PC-3 (cell line): ENCODE measurements at regions of chr5 and their contacts with region 1.

Region 1: DNA sequence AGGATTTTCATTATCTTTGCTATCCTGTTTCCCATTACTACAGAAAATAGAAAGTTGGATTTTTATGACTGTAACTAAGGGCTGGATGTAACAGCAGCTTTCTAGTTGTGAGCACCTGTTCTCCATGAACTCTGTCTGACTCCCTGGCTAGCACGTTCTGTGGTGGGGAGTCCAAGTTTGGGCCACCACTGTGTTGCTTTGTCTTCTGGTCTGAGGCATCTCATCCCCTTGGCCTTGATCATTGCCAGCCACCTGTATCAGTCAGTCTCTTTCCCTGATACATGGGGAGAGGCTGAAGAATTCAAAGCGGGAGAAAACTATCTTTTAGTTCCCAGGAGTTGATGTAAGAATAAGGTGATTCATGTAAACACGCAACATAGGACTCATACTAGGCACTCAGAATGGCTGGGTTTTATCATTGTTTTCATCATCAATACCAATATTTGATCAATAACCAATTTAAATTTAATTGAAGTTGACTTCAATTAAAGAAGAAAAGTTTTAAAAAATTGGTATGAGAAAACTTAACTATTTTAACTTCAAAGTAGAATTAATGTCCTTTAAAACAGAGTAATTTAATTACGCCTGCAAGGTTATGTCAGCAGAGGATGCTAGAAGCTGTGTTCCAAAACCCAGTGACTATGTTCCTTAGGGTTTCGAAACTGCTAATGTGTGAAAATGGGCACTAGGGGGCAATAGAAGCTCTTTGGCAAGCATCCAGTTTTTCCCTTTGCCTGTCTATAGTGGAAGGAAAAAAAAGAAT is 33.6 kb downstream of the WDR70 start:
- DNase-seq: peak; percentile 93
- ATAC-seq: peak; percentile 96
- H3K4me3 ChIP-seq: no peak overlapping the region
- H3K27ac ChIP-seq: no peak overlapping the region
- H3K4me1 ChIP-seq: no peaks in the 10 kb centered on the region
- H3K27me3 ChIP-seq: no peaks in the 10 kb centered on the region
- CTCF ChIP-seq: peak; percentile 98

Region 2: GRCh38 chr5:37471666-37472197 is 59.0 kb after region 1 on chr5:
- CTCF ChIA-PET with region 1: no interaction called
- POLR2A ChIA-PET with region 1: no interaction called
- intact Hi-C with region 1: no loop called
- DNase-seq: no peak
- ATAC-seq: no peak
- H3K4me3 ChIP-seq: no peak overlapping the region
- H3K27ac ChIP-seq: no peak overlapping the region
- H3K4me1 ChIP-seq: no peaks in the 10 kb centered on the region
- H3K27me3 ChIP-seq: no peaks in the 10 kb centered on the region
- CTCF ChIP-seq: no peak

Region 3: GRCh38 chr5:37554938-37555337 is 142.2 kb after region 1 on chr5:
- CTCF ChIA-PET with region 1: interaction called, 5 read pairs
- POLR2A ChIA-PET with region 1: no interaction called
- intact Hi-C with region 1: loop called (anchors 2 kb)
- DNase-seq: peak; percentile 64
- ATAC-seq: peak; percentile 42; the same call in 1 of the 2 replicates
- H3K4me3 ChIP-seq: no peak overlapping the region
- H3K27ac ChIP-seq: no peak overlapping the region
- H3K4me1 ChIP-seq: peaks cover 12% of the 10 kb centered on the region; the same call in 1 of the 2 replicates
- H3K27me3 ChIP-seq: no peaks in the 10 kb centered on the region
- CTCF ChIP-seq: peak; percentile 76

Region 4: DNA sequence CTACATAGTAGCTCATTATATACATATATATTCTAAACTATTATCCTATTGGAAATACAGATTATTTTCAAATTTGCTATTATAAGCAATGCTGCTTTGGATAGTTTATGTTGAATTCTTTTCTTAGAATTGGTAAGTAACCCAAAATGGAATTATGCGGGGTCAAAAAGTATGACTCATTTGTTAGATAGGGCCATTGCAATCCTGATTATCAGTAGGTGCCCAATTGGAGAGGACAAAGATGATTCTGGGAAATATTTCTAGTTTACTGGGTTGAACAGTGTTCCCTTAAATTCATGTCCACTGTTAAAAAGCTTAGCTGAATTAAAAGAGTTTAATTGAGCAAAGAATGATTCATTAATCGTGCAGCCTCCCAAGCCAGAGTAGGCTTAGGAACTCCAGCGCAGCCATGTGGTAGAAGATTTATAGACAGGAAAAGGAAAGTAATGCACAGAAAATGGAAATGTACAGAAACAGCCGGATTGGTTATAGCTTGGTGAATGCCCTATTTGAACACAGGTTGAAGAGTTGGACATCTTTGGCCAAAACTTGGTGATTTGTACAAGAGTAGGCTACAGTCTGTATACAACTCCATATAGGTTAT is 345.4 kb after region 1 on chr5:
- CTCF ChIA-PET with region 1: interaction called, 11 read pairs
- POLR2A ChIA-PET with region 1: interaction called, 4 read pairs
- intact Hi-C with region 1: loop called (anchors 1 kb)
- DNase-seq: peak; percentile 54
- ATAC-seq: no peak
- H3K4me3 ChIP-seq: no peak overlapping the region
- H3K27ac ChIP-seq: no peak overlapping the region
- H3K4me1 ChIP-seq: peaks cover 16% of the 10 kb centered on the region
- H3K27me3 ChIP-seq: no peaks in the 10 kb centered on the region
- CTCF ChIP-seq: peak; percentile 65

Region 5: DNA sequence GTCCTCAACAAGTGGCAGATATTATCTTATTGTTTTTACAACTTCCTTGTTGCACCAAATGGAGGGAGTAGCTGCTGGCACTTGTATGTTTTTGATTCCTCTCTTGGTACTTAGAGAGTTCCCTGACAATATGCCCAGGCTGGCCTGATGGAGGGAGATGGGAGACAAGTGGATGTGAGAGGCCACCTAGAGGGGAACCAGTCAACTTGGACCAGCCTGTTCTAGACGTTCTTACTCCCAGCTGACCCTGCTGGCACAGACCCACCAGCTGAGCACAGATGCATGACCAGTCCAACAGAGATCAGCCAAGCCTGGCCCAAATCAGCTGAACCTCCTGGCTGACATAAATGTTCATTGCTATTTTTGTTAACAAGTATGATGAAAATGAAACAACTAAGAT is 488.0 kb after region 1 on chr5:
- CTCF ChIA-PET with region 1: no interaction called
- POLR2A ChIA-PET with region 1: no interaction called
- intact Hi-C with region 1: loop called (anchors 2 kb)
- DNase-seq: peak; percentile 54
- ATAC-seq: peak; percentile 76
- H3K4me3 ChIP-seq: no peak overlapping the region
- H3K27ac ChIP-seq: no peak overlapping the region
- H3K4me1 ChIP-seq: no peaks in the 10 kb centered on the region
- H3K27me3 ChIP-seq: peaks cover 3% of the 10 kb centered on the region; the same call in 1 of the 2 replicates
- CTCF ChIP-seq: peak; percentile 51

Region 6: DNA sequence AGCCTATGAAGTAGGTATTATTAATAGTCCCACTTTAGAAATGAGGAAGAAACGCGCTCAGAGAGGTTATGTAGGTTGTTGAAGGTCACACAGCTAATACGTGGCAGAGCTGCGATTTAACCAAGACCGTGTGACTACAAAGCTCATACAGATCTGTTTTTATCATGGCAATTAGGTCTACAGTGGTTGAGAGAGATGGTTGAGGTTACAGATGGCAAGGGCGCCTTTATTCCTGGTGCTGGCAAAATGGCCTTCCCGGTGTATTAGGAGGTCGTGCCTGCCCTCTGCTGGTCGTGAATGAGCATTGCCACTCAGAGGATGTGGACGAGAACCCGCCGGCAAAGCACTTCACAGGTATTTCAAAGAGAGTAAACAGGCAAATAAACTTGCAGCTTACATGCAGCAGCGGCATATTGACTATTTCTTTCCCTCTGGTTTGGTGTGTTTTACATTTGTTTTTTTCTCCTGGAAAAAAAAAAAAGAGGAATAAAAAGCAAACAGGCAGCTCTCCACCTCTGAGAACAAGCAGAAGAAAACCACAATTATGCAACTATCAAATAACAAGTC is 780.4 kb after region 1 on chr5:
- CTCF ChIA-PET with region 1: no interaction called
- POLR2A ChIA-PET with region 1: no interaction called
- intact Hi-C with region 1: loop called (anchors 1 kb)
- DNase-seq: peak; percentile 85
- ATAC-seq: peak; percentile 72
- H3K4me3 ChIP-seq: no peak overlapping the region
- H3K27ac ChIP-seq: no peak overlapping the region
- H3K4me1 ChIP-seq: no peaks in the 10 kb centered on the region
- H3K27me3 ChIP-seq: peaks cover 75% of the 10 kb centered on the region
- CTCF ChIP-seq: peak; percentile 96